Ascending aorta (tissue), 2 donors: ENCODE measurements at regions of chr9 and their contacts with region 1.

Region 1: GRCh38 chr9:104927912-104928740 is at the start of gene ABCA1:
- DNase-seq: peak; percentile 82 to 95
- H3K4me3 ChIP-seq: peak within 1 kb of the TSS; percentile 69 to 90
- H3K27ac ChIP-seq: peak within 1 kb of the TSS; percentile 70 to 81
- H3K4me1 ChIP-seq: peaks cover 0 to 5% of the 10 kb centered on the region in 2 donors
- H3K27me3 ChIP-seq: no peaks in the 10 kb centered on the region
- CTCF ChIP-seq: no peak
- total RNA-seq, gene ABCA1: 14.0 TPM

Region 2: DNA sequence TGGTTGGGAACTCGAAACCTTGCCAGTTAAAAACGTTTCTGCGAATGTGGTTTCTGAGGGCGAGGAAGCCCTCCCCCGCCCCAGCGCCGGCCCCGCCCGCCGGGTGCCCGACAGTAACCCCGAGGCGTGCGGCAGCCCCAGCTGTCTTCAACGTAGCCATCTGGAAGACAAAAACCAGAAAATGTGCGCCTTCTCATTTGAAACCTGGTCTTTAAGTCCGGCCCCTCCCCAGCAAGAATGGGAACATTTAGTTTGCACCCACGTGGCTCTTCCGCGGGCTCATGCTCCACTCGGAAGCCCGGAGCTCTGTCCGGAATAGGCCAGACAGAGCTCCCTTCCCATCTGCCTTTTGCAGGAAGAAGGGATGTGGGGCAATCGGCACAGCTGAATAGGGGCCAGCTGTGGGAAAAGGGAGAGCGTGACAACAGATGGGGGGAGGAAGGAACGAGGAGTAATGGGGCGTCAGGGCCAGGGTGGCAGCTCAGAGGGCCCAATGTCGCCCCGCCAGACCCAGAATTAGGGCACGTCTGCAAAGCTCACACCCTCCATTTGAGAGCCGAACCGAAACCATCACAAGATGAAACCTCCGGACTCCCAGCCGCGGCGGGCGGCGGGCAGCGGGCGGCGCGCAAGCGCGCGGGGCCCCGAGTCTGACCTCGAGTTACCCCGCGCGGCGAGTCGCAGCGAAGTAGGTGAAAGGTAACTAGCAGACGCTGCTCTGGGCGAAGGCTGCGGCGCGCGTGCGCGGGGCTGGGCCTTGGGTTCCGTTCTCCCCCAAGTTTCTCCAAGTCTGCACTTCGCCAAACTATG is 63.2 kb after region 1 on chr9:
- intact Hi-C with region 1: loop called (anchors 1 kb)
- DNase-seq: peak; percentile 73 to 95
- H3K4me3 ChIP-seq: peak overlapping the region; percentile 66 to 67
- H3K27ac ChIP-seq: peak overlapping the region; percentile 86 to 96
- H3K4me1 ChIP-seq: peaks cover 9 to 21% of the 10 kb centered on the region in 2 donors
- H3K27me3 ChIP-seq: no peaks in the 10 kb centered on the region
- CTCF ChIP-seq: no peak

Region 3: DNA sequence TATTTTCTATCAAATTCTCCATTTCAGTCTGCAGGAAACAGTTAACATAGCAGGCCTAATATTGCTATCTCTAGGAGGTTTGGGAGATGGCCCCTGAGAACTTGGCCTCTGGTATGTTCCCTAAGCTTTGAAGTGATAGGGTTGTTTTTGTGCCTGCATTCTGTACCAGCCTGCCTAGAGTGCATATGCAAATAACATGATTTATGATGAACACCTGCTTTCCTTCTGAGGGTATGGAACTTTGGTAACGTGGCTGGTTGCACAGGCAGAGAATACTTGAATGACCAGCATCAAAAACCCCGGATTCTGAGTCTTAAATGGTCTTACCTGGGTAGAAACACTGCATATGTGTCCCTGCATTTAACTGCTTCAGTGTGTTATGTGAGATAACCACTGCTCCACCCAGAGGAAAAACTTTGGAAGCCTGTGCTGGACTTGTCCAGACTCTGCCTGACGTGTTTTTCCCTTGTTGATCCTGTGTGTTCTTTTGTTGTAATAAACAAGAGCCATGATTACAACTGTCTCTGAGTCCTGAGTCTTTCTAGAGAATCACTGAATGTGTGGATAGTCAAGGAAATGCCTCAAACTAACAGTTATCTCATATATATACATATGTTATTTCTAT is 111.2 kb after region 1 on chr9:
- intact Hi-C with region 1: no loop called
- DNase-seq: no peak
- H3K4me3 ChIP-seq: no peak overlapping the region
- H3K27ac ChIP-seq: no peak overlapping the region
- H3K4me1 ChIP-seq: no peaks in the 10 kb centered on the region
- H3K27me3 ChIP-seq: no peaks in the 10 kb centered on the region
- CTCF ChIP-seq: no peak

Region 4: GRCh38 chr9:105157130-105157583 is 229.0 kb after region 1 on chr9:
- intact Hi-C with region 1: loop called (anchors 2 kb)
- DNase-seq: peak in 1 of 2 donors; percentile 74
- H3K4me3 ChIP-seq: no peak overlapping the region
- H3K27ac ChIP-seq: no peak overlapping the region
- H3K4me1 ChIP-seq: no peaks in the 10 kb centered on the region
- H3K27me3 ChIP-seq: no peaks in the 10 kb centered on the region
- CTCF ChIP-seq: peak; percentile 21 to 50 (median 27)

Region 5: GRCh38 chr9:105359892-105360291 is 431.8 kb after region 1 on chr9:
- intact Hi-C with region 1: loop called (anchors 5 kb)
- DNase-seq: no peak
- H3K4me3 ChIP-seq: no peak overlapping the region
- H3K27ac ChIP-seq: no peak overlapping the region
- H3K4me1 ChIP-seq: no peaks in the 10 kb centered on the region
- H3K27me3 ChIP-seq: no peaks in the 10 kb centered on the region
- CTCF ChIP-seq: no peak